Activated CD4-positive, alpha-beta T cell treated with anti-CD3 and anti-CD28 coated beads, Interleukin-2, amount 10 ng/mL, durations not matched to agents 24 days and 14 days (primary cell): ENCODE measurements at regions of chr17 and their contacts with region 1.

Region 1: GRCh38 chr17:77331301-77331864 is 190.6 kb downstream of the SEC14L1 start:
- DNase-seq: peak; percentile 98
- H3K4me3 Mint-ChIP-seq: peak overlapping the region; percentile 84
- H3K27ac Mint-ChIP-seq: peak overlapping the region; percentile 94
- H3K4me1 Mint-ChIP-seq: peaks cover 40% of the 10 kb centered on the region
- H3K27me3 Mint-ChIP-seq: no peaks in the 10 kb centered on the region

Region 2: DNA sequence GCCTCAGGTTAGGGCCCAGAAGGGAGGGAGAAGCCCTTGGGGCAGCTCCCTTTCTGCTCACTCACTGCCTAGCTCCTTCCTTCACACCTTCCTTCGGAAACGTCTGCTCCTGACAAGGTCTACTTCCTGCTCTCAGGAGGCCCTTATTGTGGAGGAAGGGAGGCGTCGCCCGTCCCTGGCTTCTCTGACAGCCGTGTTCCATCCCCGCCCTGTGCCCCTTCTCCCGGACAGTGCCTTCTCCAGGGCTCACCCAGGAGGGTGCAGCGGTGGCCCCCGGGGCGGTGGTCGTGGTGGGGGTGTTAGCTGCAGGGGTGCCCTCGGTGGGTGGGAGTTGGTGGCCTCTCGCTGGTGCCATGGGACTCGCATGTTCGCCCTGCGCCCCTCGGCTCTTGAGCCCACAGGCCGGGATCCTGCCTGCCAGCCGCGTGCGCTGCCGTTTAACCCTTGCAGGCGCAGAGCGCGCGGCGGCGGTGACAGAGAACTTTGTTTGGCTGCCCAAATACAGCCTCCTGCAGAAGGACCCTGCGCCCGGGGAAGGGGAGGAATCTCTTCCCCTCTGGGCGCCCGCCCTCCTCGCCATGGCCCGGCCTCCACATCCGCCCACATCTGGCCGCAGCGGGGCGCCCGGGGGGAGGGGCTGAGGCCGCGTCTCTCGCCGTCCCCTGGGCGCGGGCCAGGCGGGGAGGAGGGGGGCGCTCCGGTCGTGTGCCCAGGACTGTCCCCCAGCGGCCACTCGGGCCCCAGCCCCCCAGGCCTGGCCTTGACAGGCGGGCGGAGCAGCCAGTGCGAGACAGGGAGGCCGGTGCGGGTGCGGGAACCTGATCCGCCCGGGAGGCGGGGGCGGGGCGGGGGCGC is 41.3 kb after region 1 on chr17:
- intact Hi-C with region 1: loop called (anchors 1 kb)
- DNase-seq: peak; percentile 95
- H3K4me3 Mint-ChIP-seq: peak overlapping the region; percentile 81
- H3K27ac Mint-ChIP-seq: peak overlapping the region; percentile 84
- H3K4me1 Mint-ChIP-seq: peaks cover 57% of the 10 kb centered on the region
- H3K27me3 Mint-ChIP-seq: no peaks in the 10 kb centered on the region

Region 3: DNA sequence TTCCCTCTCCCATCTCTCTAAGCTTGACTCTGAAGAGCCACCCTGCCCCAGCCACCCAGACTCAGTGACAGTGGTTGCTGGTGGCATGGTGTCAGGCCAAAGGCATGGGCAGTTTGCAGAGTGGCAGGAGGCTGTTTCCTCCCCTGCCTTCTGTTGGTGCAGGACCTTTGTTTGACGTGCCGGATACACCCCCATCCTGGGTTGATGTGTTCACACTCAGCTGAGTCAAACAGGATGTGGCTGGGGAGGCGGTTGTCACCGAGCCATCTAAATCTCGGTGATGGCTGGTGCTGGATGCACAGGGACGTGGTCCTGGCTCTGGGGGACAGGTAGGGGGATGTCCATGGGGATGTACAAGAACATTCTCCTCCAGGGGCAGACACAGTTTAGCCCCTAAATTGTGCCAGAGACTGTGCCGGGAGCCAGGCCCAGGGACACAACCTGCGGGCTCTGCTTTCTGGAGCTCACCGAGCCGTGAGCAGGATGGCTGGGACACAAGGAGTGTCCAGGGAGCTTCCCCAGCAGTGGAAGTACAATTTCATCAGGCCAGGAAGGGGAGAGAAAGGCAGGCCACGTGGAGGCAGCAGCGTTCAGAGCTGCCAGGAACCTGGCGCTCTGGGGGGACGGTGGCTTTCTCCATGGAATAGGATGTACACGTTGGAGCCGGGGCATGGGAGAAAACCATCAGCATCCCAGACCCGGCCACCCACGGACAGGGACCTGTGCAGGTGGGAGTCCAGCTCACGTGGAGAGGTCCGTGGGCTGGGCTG is 73.6 kb after region 1 on chr17:
- intact Hi-C with region 1: loop called (anchors 1 kb)
- DNase-seq: peak; percentile 95
- H3K4me3 Mint-ChIP-seq: peak overlapping the region; percentile 95
- H3K27ac Mint-ChIP-seq: peak overlapping the region; percentile 90
- H3K4me1 Mint-ChIP-seq: peaks cover 85% of the 10 kb centered on the region
- H3K27me3 Mint-ChIP-seq: no peaks in the 10 kb centered on the region

Region 4: DNA sequence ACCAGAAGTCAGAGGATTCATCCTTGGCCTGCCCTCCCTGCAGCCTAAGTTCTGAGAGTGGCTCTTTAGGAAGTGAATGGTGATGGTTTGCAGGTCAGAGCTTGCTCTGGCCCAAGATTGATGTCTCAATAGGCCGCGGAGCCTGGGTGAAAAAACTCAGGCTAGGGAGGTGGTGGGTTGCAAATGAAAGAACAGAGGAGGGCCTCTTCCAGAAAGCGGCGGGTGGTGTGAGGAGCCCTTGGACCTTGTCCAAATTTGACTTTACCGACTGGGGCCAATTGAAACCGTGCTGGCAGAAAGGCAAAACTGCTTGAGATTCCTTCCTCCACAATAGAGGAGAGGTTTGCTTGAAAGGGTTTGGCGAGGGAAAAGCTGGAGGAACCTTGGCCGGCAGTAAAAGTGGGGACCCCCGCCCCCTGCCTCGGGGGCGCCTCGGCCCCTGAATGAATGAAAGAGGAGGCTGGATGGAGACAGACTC is 140.6 kb after region 1 on chr17:
- intact Hi-C with region 1: loop called (anchors 5 kb)
- DNase-seq: no peak
- H3K4me3 Mint-ChIP-seq: peak overlapping the region; percentile 60
- H3K27ac Mint-ChIP-seq: peak overlapping the region; percentile 83
- H3K4me1 Mint-ChIP-seq: peaks cover 83% of the 10 kb centered on the region
- H3K27me3 Mint-ChIP-seq: no peaks in the 10 kb centered on the region

Region 5: GRCh38 chr17:77666881-77667395 is 335.6 kb after region 1 on chr17:
- intact Hi-C with region 1: loop called (anchors 2 kb)
- DNase-seq: peak; percentile 95
- H3K4me3 Mint-ChIP-seq: peak overlapping the region; percentile 88
- H3K27ac Mint-ChIP-seq: peak overlapping the region; percentile 97
- H3K4me1 Mint-ChIP-seq: peaks cover 34% of the 10 kb centered on the region
- H3K27me3 Mint-ChIP-seq: no peaks in the 10 kb centered on the region

Region 6: GRCh38 chr17:77700165-77700881 is 368.9 kb after region 1 on chr17:
- intact Hi-C with region 1: no loop called
- DNase-seq: no peak
- H3K4me3 Mint-ChIP-seq: no peak overlapping the region
- H3K27ac Mint-ChIP-seq: no peak overlapping the region
- H3K4me1 Mint-ChIP-seq: peaks cover 3% of the 10 kb centered on the region
- H3K27me3 Mint-ChIP-seq: peaks cover 20% of the 10 kb centered on the region